CD4-positive, alpha-beta T cell (primary cell): ENCODE measurements at regions of chr11 and their contacts with region 1.

Region 1: GRCh38 chr11:13923716-13924650 is 38.5 kb upstream of the SPON1 start:
- DNase-seq: peak in 12 of 14 experiments; percentile 3 to 77 (median 25)
- ATAC-seq: peak; percentile 90
- H3K4me3 ChIP-seq: peak overlapping the region; percentile 17
- H3K4me3 Mint-ChIP-seq: peak overlapping the region; percentile 83
- H3K27ac ChIP-seq: peak overlapping the region; percentile 42 to 87
- H3K27ac Mint-ChIP-seq: peak overlapping the region; percentile 95
- H3K4me1 ChIP-seq: peaks cover 47% of the 10 kb centered on the region
- H3K4me1 Mint-ChIP-seq: peaks cover 70% of the 10 kb centered on the region
- H3K27me3 ChIP-seq: no peaks in the 10 kb centered on the region
- H3K27me3 Mint-ChIP-seq: no peaks in the 10 kb centered on the region
- CTCF ChIP-seq: no peak

Region 2: GRCh38 chr11:13942983-13943382 is 19.0 kb after region 1 on chr11:
- CTCF ChIA-PET with region 1: interaction called, 4 read pairs
- POLR2A ChIA-PET with region 1: interaction called, 44 read pairs
- intact Hi-C with region 1: loop called in 1 of 2 experiments (anchors 2 kb)
- DNase-seq: no peak
- ATAC-seq: no peak
- H3K4me3 ChIP-seq: no peak overlapping the region
- H3K4me3 Mint-ChIP-seq: no peak overlapping the region
- H3K27ac ChIP-seq: no peak overlapping the region
- H3K27ac Mint-ChIP-seq: no peak overlapping the region
- H3K4me1 ChIP-seq: peaks cover 56% of the 10 kb centered on the region
- H3K4me1 Mint-ChIP-seq: peaks cover 71% of the 10 kb centered on the region
- H3K27me3 ChIP-seq: no peaks in the 10 kb centered on the region
- H3K27me3 Mint-ChIP-seq: no peaks in the 10 kb centered on the region
- CTCF ChIP-seq: no peak